ENCODE measurements at regions of chr2 and their contacts with region 1.

Region 1: DNA sequence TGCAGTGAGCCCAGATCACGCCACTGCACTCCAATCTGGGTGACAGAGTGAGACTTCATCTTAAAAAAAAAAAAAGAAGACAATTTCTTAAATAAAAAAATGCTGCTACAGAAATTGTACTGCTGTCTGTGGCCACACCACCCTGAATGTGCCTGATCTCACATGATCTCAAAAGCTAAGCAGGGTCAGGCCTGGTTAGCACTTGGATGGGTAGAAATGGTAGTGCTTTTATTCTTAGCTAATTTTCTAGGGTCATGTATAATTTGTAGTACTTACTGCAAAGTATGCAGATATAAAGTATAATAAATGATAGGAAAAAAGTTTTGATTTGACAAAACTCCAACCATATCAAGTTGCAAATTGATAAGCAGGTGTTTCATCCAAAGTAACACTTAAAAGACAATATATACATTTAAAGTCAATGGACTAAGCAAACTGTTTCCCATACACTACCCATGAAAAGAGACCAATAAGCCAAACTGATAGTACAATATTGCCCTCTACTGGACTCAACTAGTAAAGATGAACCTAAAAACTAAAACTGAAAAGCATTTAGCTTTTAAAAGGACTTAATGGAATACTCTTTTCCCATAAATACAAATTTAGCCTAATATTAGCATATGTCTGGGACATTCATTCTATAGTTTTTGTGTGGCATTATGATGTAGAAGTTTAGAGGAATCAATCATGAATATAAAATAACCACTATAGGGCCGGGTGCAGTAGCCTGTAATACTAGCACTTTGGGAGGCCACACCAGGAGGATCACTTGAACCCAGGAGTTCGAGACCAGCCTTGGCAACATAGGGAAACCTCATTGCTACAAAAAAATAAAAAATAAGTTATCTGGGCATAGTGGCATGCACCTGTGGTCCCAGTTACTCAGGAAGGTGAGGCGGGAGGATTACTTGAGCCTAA is 18.6 kb upstream of the PEX13 start:
- DNase-seq: no peak
- ATAC-seq: peak; percentile 79
- H3K4me3 Mint-ChIP-seq: no peak overlapping the region
- H3K27ac Mint-ChIP-seq: no peak overlapping the region
- H3K4me1 Mint-ChIP-seq: no peaks in the 10 kb centered on the region
- H3K27me3 Mint-ChIP-seq: no peaks in the 10 kb centered on the region

Region 2: GRCh38 chr2:60756191-60757041 is 242.5 kb before region 1 on chr2 and contains the start of gene PAPOLG:
- CTCF ChIA-PET with region 1: interaction called, 15 read pairs
- POLR2A ChIA-PET with region 1: interaction called, 3 read pairs
- DNase-seq: peak; percentile 98
- ATAC-seq: peak; percentile 99
- H3K4me3 Mint-ChIP-seq: peak within 1 kb of the TSS; percentile 100
- H3K27ac Mint-ChIP-seq: peak within 1 kb of the TSS; percentile 100
- H3K4me1 Mint-ChIP-seq: peaks cover 23% of the 10 kb centered on the region
- H3K27me3 Mint-ChIP-seq: no peaks in the 10 kb centered on the region
- total RNA-seq, gene PAPOLG: 17.3 to 19.5 TPM

Region 3: GRCh38 chr2:60806988-60807681 is 191.8 kb before region 1 on chr2:
- CTCF ChIA-PET with region 1: interaction called, 73 read pairs
- POLR2A ChIA-PET with region 1: no interaction called
- DNase-seq: peak; percentile 41
- ATAC-seq: peak; percentile 71
- H3K4me3 Mint-ChIP-seq: peak overlapping the region; percentile 17
- H3K27ac Mint-ChIP-seq: peak overlapping the region; percentile 89
- H3K4me1 Mint-ChIP-seq: peaks cover 28% of the 10 kb centered on the region
- H3K27me3 Mint-ChIP-seq: no peaks in the 10 kb centered on the region

Region 4: GRCh38 chr2:60881047-60881932 is 117.6 kb before region 1 on chr2 and contains the start of gene REL:
- CTCF ChIA-PET with region 1: interaction called, 15 read pairs
- POLR2A ChIA-PET with region 1: interaction called, 3 read pairs
- DNase-seq: peak; percentile 91
- ATAC-seq: peak; percentile 89
- H3K4me3 Mint-ChIP-seq: peak within 1 kb of the TSS; percentile 95
- H3K27ac Mint-ChIP-seq: peak within 1 kb of the TSS; percentile 98
- H3K4me1 Mint-ChIP-seq: peaks cover 18% of the 10 kb centered on the region
- H3K27me3 Mint-ChIP-seq: no peaks in the 10 kb centered on the region
- total RNA-seq, gene REL: 20.1 to 21.6 TPM